ENCODE measurements at regions of chr15 and their contacts with region 1.

Region 1: GRCh38 chr15:68383161-68384074 is 48.5 kb downstream of the ITGA11 start:
- DNase-seq: peak in 4 of 7 donors; percentile 27 to 66 (median 60)
- H3K4me3 ChIP-seq: no peak overlapping the region
- H3K27ac ChIP-seq: peak overlapping the region in 2 of 5 donors; percentile 74 to 82
- H3K4me1 ChIP-seq: peaks cover 7 to 19% of the 10 kb centered on the region in 2 donors
- H3K27me3 ChIP-seq: no peaks in the 10 kb centered on the region
- CTCF ChIP-seq: peak; percentile 61 to 79 (median 72)
- POLR2A ChIP-seq: no peak

Region 2: GRCh38 chr15:68536331-68537095 is 153.1 kb after region 1 on chr15:
- intact Hi-C with region 1: loop called in 1 of 2 experiments (anchors 10 kb)
- DNase-seq: peak in 1 of 7 donors; percentile 23
- H3K4me3 ChIP-seq: no peak overlapping the region
- H3K27ac ChIP-seq: peak overlapping the region in 1 of 5 donors; percentile 59
- H3K4me1 ChIP-seq: no peaks in the 10 kb centered on the region
- H3K27me3 ChIP-seq: no peaks in the 10 kb centered on the region
- CTCF ChIP-seq: no peak
- POLR2A ChIP-seq: no peak